ENCODE measurements at regions of chr1 and their contacts with region 1.

Region 1: DNA sequence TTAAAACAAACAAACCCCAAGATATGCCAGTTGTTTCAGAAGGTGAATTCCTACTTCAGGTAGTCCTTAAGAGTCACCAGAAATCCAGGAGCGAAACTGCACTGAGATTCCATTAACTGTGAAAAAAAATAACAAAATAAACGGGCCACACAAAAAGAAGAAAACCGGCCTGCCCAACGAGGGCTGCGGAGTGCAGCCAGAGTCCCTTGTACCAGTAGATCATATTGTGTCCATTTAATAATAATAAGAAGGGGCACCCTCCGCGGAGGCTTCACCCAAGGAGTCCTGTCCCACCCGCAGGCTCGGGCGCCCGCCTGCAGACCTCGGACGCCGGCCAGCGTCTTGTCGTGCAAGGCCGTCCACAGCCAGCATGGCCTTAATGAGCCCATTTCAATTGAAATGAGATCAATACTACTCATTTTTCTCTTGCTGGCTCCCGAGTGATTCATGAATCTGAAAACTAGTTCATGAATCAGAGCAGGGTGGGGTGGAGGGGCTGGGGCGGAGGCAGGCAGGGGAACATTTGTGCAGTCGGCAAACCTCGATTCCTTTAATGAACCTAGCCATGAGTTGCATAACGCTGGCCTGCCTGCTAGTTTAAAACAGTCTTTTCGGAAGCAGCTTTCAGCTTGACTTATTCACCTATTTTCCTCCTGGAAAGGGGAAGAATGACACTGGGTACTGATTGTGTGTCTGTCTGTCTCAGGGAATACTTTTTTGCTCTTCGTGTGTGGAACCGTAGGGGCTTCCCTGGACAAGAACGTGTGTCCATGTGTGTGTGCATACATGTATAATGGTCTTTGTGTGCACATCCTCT is 113.1 kb upstream of the IRF2BP2 start:
- DNase-seq: peak; percentile 95
- H3K4me3 ChIP-seq: peak overlapping the region; percentile 24 to 34 (median 28)
- H3K27ac ChIP-seq: peak overlapping the region; percentile 91 to 98 (median 98)
- H3K4me1 ChIP-seq: peaks cover 95 to 97% (median 96%) of the 10 kb centered on the region in 4 donors
- H3K27me3 ChIP-seq: no peaks in the 10 kb centered on the region
- CTCF ChIP-seq: no peak
- EP300 ChIP-seq: no peak
- POLR2A ChIP-seq: no peak

Region 2: DNA sequence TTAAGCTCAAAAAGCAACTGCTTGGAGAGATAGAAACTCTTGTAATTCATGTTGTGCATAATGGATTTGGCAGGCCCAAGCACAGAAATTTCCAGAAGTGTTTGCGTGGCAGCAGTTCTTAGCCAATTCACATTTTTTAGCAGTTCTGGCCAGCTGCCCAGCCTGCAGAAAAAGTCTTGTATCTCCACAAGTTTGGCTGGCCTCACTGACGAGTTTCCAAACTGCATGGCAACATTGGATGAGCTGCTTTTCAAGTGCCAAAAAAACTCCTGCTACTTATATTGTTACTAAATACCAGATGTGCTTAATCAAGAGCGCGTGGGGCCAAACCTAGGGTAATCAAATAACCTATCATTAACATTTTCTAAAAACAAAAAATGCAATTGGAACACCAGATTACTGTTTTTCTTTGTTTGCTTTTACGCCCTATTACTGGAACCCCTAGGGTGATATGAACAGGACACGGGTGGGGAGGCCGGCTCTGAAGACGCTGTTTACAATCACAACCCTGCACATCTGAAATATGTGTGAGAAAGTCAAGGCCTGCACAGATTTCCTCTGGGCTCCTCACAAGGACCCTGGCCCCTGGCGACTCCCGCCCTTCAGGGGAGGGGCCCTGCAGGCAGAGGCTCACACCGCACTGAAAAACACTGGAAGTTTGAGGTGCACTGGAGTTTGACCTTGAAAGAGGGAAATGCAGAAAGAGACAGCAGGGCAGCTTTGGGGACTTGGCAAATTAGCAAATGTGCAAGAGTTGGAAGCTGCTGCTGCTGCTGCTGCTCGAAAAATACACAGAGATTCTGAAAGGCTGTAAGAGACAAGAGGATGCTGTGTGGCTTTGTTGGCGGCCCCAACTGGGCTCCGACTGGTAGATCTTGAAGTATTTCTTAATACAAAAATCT is 188.9 kb before region 1 on chr1:
- intact Hi-C with region 1: loop called (anchors 10 kb)
- DNase-seq: peak; percentile 98
- H3K4me3 ChIP-seq: peak overlapping the region in 1 of 4 donors; percentile 0
- H3K27ac ChIP-seq: peak overlapping the region; percentile 92 to 99 (median 96)
- H3K4me1 ChIP-seq: peaks cover 98 to 100% (median 99%) of the 10 kb centered on the region in 4 donors
- H3K27me3 ChIP-seq: no peaks in the 10 kb centered on the region
- CTCF ChIP-seq: no peak
- EP300 ChIP-seq: no peak
- POLR2A ChIP-seq: no peak

Region 3: DNA sequence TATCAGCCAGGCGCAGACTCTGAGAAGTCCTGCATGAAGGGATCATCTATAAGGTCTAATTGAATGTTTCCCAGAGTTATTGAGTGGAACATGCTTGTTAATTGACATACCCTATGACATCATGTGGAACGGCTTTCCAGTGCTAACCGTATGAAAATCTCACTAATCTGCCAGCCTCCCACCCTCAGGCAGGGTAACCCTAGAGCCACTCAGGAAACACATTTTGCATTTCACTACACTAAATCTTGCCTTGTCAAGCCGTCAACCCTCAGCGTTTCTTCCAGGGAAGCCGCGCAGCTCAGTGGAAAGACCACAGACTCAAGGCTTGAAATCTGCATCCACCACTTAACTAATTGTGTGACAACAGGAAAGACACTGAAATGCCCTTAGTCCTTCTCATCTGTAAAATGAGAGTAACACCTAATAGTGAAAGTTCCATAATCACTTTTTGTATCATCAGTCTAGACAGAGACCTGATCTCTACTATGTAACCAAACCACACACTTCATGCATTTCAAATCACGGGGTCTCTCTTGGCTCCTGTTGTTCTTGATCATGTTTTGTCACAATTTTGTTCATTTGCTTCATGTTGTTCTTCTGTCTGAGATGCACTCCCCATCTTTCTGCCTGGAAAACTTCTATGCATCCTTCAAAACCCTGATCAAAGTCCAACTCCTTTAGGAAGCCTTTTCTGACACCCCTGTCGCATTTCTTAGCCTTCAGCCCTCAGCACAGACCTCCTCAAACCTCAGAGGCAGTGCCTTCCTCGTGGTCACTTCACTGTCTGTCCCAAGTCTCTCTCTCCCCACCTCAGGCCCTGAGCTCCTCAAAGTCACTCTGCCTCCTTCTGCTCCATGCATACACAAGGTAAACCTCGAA is 159.0 kb after region 1 on chr1:
- intact Hi-C with region 1: no loop called
- DNase-seq: no peak
- H3K4me3 ChIP-seq: no peak overlapping the region
- H3K27ac ChIP-seq: no peak overlapping the region
- H3K4me1 ChIP-seq: peaks cover 15 to 24% (median 22%) of the 10 kb centered on the region in 4 donors
- H3K27me3 ChIP-seq: no peaks in the 10 kb centered on the region
- CTCF ChIP-seq: no peak
- EP300 ChIP-seq: no peak
- POLR2A ChIP-seq: no peak

Region 4: GRCh38 chr1:234918181-234918841 is 195.2 kb after region 1 on chr1:
- intact Hi-C with region 1: loop called (anchors 10 kb)
- DNase-seq: no peak
- H3K4me3 ChIP-seq: no peak overlapping the region
- H3K27ac ChIP-seq: peak overlapping the region; percentile 79 to 85 (median 82)
- H3K4me1 ChIP-seq: peaks cover 61 to 73% (median 68%) of the 10 kb centered on the region in 4 donors
- H3K27me3 ChIP-seq: no peaks in the 10 kb centered on the region
- CTCF ChIP-seq: no peak
- EP300 ChIP-seq: peak; percentile 65
- POLR2A ChIP-seq: no peak

Region 5: DNA sequence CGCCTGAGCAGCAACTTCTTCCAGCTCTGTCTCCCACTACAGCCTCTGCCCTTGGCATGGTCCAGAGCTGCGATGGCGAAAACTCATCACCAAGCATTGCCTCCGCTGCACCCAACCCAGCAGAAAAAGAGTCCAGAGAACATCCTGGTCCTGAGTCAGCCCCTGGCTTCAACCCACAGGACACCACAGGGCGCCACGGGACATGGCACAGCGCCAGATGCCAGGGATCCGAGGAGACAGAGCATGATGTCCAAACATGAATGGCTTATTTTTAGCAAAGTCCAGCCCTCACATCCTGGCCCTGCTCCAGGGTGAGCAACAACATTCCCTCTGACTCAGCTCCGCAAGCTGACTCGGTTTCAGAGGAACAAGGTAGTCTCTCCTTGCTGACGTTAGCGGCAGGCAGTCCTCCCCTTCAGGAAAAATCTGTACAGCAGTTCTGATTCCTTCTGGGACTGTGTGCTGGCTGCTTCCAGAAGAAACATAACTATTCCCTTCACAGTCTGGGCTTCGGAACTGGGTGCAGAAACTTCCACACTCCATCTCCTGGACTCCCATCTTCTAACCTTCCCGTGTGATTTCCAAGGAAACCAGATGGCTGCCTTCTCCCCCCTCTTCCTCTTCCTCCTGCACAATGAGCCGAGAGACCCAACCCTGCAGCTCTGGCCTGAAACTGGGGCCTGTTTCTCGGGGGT is 274.2 kb after region 1 on chr1:
- intact Hi-C with region 1: loop called (anchors 5 kb)
- DNase-seq: peak; percentile 99
- H3K4me3 ChIP-seq: peak overlapping the region in 3 of 4 donors; percentile 22 to 30 (median 27)
- H3K27ac ChIP-seq: peak overlapping the region; percentile 95 to 98 (median 96)
- H3K4me1 ChIP-seq: peaks cover 34 to 55% (median 52%) of the 10 kb centered on the region in 4 donors
- H3K27me3 ChIP-seq: no peaks in the 10 kb centered on the region
- CTCF ChIP-seq: no peak
- EP300 ChIP-seq: peak; percentile 99
- POLR2A ChIP-seq: no peak